ENCODE measurements at regions of chr11 and their contacts with region 1.

Region 1: GRCh38 chr11:81237139-81237538 is 1496.5 kb downstream of the FAM181B start:
- DNase-seq: peak; percentile 40 to 73
- H3K4me3 ChIP-seq: no peak overlapping the region
- H3K4me3 Mint-ChIP-seq: no peak overlapping the region
- H3K27ac Mint-ChIP-seq: no peak overlapping the region
- H3K4me1 ChIP-seq: peaks cover 7% of the 10 kb centered on the region; the same call in 1 of the 2 replicates
- H3K4me1 Mint-ChIP-seq: no peaks in the 10 kb centered on the region
- H3K27me3 ChIP-seq: no peaks in the 10 kb centered on the region
- H3K27me3 Mint-ChIP-seq: no peaks in the 10 kb centered on the region
- CTCF ChIP-seq: peak; percentile 77 to 82

Region 2: GRCh38 chr11:79762279-79762921 is 1474.7 kb before region 1 on chr11:
- CTCF ChIA-PET with region 1: no interaction called
- POLR2A ChIA-PET with region 1: no interaction called
- intact Hi-C with region 1: loop called (anchors 1 kb)
- DNase-seq: peak in 1 of 2 experiments; percentile 20
- H3K4me3 ChIP-seq: no peak overlapping the region
- H3K4me3 Mint-ChIP-seq: no peak overlapping the region
- H3K27ac Mint-ChIP-seq: no peak overlapping the region
- H3K4me1 ChIP-seq: no peaks in the 10 kb centered on the region
- H3K4me1 Mint-ChIP-seq: no peaks in the 10 kb centered on the region
- H3K27me3 ChIP-seq: no peaks in the 10 kb centered on the region
- H3K27me3 Mint-ChIP-seq: peaks cover 4% of the 10 kb centered on the region
- CTCF ChIP-seq: peak in 1 of 2 experiments; percentile 29

Region 3: DNA sequence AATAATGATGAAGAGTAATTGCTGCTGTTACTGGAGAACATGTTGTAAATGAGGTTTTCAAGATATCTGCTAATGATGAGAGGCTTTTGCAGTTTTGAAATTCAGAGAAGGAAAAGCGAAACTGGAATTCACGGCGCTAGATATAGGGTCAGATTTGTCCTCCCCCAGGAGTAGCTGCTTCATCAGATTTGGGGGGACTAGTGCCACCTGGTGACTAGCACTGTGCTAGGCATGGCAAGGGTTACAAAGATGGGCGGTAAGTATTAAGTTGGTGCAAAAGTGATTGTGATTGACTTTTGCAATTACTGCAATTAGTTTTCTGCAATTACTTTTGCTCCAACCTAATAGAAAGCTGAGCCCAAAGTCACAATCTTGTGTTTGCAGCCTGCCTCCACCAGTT is 916.4 kb before region 1 on chr11:
- CTCF ChIA-PET with region 1: no interaction called
- POLR2A ChIA-PET with region 1: no interaction called
- intact Hi-C with region 1: loop called (anchors 10 kb)
- DNase-seq: no peak
- H3K4me3 ChIP-seq: no peak overlapping the region
- H3K4me3 Mint-ChIP-seq: no peak overlapping the region
- H3K27ac Mint-ChIP-seq: no peak overlapping the region
- H3K4me1 ChIP-seq: no peaks in the 10 kb centered on the region
- H3K4me1 Mint-ChIP-seq: no peaks in the 10 kb centered on the region
- H3K27me3 ChIP-seq: no peaks in the 10 kb centered on the region; the same call in 1 of the 2 replicates
- H3K27me3 Mint-ChIP-seq: peaks cover 19% of the 10 kb centered on the region
- CTCF ChIP-seq: no peak

Region 4: DNA sequence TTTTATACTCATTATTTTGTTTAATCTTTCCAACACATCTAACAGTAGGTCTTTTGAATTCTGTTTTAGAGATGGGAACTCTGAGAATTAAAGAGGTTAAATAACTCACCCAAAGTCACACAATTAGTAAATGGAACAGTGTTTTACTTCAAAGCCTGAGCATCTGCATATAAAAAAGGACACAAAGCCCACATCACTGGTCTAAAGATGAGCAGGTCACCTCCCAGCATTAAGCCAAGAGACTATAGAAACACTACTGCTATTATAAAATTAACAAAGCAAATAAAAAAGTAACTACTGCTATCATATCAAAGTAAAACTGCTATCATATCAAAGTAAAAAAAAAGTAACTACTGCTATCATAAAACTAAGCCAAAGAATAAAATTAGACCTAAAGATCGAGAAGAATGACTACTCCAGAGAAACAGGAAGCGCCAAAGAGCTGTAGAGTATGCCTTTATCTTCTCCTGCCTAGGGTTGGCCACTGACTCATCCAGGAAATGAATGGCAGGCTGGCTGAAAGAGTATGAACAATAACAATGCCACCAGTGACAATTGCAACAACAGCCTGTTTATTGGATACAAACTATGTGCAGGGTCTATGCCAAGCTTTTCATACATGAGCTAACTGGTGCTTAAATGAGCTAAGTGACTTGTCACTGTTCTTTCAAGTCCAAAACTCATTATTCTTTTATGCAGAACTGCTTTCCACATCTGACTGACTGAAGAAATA is 643.3 kb before region 1 on chr11:
- CTCF ChIA-PET with region 1: no interaction called
- POLR2A ChIA-PET with region 1: no interaction called
- intact Hi-C with region 1: loop called (anchors 10 kb)
- DNase-seq: peak; percentile 19 to 43
- H3K4me3 ChIP-seq: no peak overlapping the region
- H3K4me3 Mint-ChIP-seq: no peak overlapping the region
- H3K27ac Mint-ChIP-seq: no peak overlapping the region
- H3K4me1 ChIP-seq: peaks cover 46% of the 10 kb centered on the region
- H3K4me1 Mint-ChIP-seq: peaks cover 44% of the 10 kb centered on the region
- H3K27me3 ChIP-seq: no peaks in the 10 kb centered on the region
- H3K27me3 Mint-ChIP-seq: no peaks in the 10 kb centered on the region
- CTCF ChIP-seq: no peak

Region 5: DNA sequence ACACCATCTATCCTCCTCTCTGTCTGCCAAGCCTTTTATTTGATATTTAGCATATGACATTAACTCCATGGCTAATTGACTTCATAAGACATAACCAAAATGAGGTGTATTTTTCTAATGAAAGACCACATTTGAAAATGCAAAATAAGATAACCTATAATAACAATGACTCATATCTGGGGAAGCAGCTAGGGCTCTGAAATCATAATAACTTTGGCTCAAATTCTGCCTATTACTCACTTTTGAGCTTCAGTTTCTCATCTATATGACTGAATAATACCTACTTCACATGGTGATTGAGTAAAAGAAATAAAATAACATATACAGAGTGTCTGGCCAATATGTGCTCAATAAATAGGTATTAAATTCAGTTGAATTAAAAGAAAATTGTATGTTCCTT is 376.5 kb before region 1 on chr11:
- CTCF ChIA-PET with region 1: no interaction called
- POLR2A ChIA-PET with region 1: no interaction called
- intact Hi-C with region 1: loop called (anchors 10 kb)
- DNase-seq: no peak
- H3K4me3 ChIP-seq: no peak overlapping the region
- H3K4me3 Mint-ChIP-seq: no peak overlapping the region
- H3K27ac Mint-ChIP-seq: no peak overlapping the region
- H3K4me1 ChIP-seq: no peaks in the 10 kb centered on the region
- H3K4me1 Mint-ChIP-seq: no peaks in the 10 kb centered on the region
- H3K27me3 ChIP-seq: no peaks in the 10 kb centered on the region
- H3K27me3 Mint-ChIP-seq: no peaks in the 10 kb centered on the region
- CTCF ChIP-seq: no peak

Region 6: GRCh38 chr11:81104051-81104450 is 133.1 kb before region 1 on chr11:
- CTCF ChIA-PET with region 1: no interaction called
- POLR2A ChIA-PET with region 1: no interaction called
- intact Hi-C with region 1: loop called (anchors 10 kb)
- DNase-seq: peak in 1 of 2 experiments; percentile 24
- H3K4me3 ChIP-seq: no peak overlapping the region
- H3K4me3 Mint-ChIP-seq: no peak overlapping the region
- H3K27ac Mint-ChIP-seq: no peak overlapping the region
- H3K4me1 ChIP-seq: no peaks in the 10 kb centered on the region
- H3K4me1 Mint-ChIP-seq: no peaks in the 10 kb centered on the region
- H3K27me3 ChIP-seq: no peaks in the 10 kb centered on the region
- H3K27me3 Mint-ChIP-seq: peaks cover 9% of the 10 kb centered on the region
- CTCF ChIP-seq: no peak

Region 7: DNA sequence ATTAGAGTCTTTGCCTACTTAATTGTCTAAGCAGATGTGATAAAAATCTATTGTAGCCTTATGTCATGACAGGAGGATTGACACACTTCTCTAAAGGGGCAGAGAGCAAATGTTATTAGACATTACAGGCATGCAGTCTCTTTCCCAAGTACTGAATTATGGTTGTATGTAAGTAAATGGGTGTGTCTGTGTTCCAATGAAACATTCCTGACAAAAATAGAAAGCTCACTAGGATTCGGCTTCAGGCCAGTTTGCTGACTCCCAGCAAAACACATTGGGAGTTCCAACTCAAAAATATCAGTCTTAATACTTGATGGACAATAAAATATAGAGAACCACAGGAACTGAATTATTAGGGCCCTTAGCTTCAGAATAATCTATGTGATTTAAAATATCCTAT is 16.1 kb after region 1 on chr11:
- CTCF ChIA-PET with region 1: no interaction called
- POLR2A ChIA-PET with region 1: no interaction called
- intact Hi-C with region 1: no loop called
- DNase-seq: no peak
- H3K4me3 ChIP-seq: no peak overlapping the region
- H3K4me3 Mint-ChIP-seq: no peak overlapping the region
- H3K27ac Mint-ChIP-seq: no peak overlapping the region
- H3K4me1 ChIP-seq: peaks cover 1% of the 10 kb centered on the region; the same call in 1 of the 2 replicates
- H3K4me1 Mint-ChIP-seq: peaks cover under 1% of the 10 kb centered on the region
- H3K27me3 ChIP-seq: no peaks in the 10 kb centered on the region
- H3K27me3 Mint-ChIP-seq: no peaks in the 10 kb centered on the region
- CTCF ChIP-seq: no peak

Region 8: DNA sequence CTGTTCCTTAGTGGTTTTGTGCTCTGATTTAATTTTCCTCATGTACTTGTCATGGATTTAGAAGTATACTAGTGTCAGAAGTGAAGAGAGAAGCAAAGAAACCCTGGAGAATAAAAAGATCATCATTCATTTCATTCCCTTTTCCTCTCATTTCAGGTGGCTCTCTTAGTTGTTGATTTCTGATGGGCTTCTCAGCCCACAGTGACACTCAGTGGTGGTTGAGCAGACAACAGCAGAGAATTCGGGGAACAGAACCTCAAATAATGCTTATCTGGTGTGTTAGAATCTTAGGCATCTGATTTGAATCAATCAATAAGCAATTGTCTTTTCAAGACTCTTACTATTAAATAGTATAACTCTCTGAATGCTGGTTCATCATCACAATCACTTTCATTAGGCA is 207.2 kb after region 1 on chr11:
- CTCF ChIA-PET with region 1: no interaction called
- POLR2A ChIA-PET with region 1: no interaction called
- intact Hi-C with region 1: loop called (anchors 2 kb)
- DNase-seq: peak in 1 of 2 experiments; percentile 18
- H3K4me3 ChIP-seq: no peak overlapping the region
- H3K4me3 Mint-ChIP-seq: no peak overlapping the region
- H3K27ac Mint-ChIP-seq: no peak overlapping the region
- H3K4me1 ChIP-seq: no peaks in the 10 kb centered on the region
- H3K4me1 Mint-ChIP-seq: no peaks in the 10 kb centered on the region
- H3K27me3 ChIP-seq: no peaks in the 10 kb centered on the region
- H3K27me3 Mint-ChIP-seq: no peaks in the 10 kb centered on the region
- CTCF ChIP-seq: peak; percentile 49 to 58

Region 9: DNA sequence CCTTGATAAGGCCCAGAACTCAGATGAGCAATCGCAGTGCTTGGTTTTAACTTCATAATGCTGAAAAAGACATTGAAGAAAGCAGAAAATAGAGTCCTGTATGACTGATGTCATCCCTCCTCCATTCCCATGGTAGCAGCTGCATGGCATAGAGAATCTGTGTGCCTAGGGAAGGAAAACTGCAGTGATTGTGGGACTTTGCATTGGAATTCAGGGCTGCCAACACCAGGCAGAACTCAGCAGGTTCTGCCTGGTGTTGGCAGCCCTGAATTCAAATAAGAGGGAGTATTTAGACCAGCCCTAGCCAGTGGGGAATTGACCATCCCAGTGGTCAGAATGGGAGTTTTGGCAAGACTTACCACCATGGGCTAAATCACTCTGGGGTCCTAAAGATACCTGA is 480.6 kb after region 1 on chr11:
- CTCF ChIA-PET with region 1: no interaction called
- POLR2A ChIA-PET with region 1: no interaction called
- intact Hi-C with region 1: no loop called
- DNase-seq: no peak
- H3K4me3 ChIP-seq: no peak overlapping the region
- H3K4me3 Mint-ChIP-seq: no peak overlapping the region
- H3K27ac Mint-ChIP-seq: no peak overlapping the region
- H3K4me1 ChIP-seq: no peaks in the 10 kb centered on the region
- H3K4me1 Mint-ChIP-seq: no peaks in the 10 kb centered on the region
- H3K27me3 ChIP-seq: no peaks in the 10 kb centered on the region
- H3K27me3 Mint-ChIP-seq: no peaks in the 10 kb centered on the region
- CTCF ChIP-seq: no peak

Measured in Caco-2 (cell line).